ENCODE measurements at regions of chr1 and their contacts with region 1.

Region 1: DNA sequence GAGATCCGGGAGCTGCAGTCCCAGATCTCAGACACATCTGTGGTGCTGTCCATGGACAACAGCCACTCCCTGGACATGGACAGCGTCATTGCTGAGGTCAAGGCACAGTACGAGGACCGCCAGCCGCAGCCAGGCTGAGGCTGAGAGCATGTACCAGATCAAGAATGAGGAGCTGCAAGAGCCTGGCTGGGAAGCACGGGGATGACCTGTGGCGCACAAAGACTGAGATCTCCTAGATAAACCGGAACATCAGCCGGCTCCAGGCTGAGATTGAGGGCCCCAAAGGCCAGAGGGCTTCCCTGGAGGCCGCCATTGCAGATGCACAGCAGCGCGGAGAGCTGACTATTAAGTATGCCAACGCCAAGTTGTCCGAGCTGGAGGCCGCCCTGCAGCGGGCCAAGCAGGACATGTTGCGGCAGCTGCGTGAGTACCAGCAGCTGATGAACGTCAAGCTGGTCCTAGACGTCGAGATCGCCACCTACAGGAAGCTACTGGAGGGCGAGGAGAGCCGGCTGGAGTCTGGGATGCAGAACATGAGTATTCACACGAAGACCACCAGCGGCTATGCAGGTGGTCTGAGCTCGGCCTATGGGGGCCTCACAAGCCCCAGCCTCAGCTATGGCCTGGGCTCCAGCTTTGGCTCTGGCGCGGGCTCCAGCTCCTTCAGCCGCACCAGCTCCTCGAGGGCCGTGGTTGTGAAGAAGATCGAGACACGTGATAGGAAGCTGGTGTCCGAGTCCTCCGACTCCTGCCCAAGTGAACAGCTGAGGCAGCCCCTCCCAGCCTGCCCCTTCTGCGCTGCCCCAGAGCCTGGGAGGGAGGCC is 25.5 kb downstream of the ETV3L start:
- DNase-seq: peak; percentile 82

Region 2: GRCh38 chr1:156070548-156070947 is 1003.6 kb before region 1 on chr1:
- intact Hi-C with region 1: no loop called
- DNase-seq: no peak

Region 3: GRCh38 chr1:156969496-156969895 is 104.7 kb before region 1 on chr1:
- intact Hi-C with region 1: loop called (anchors 5 kb)
- DNase-seq: no peak

Region 4: DNA sequence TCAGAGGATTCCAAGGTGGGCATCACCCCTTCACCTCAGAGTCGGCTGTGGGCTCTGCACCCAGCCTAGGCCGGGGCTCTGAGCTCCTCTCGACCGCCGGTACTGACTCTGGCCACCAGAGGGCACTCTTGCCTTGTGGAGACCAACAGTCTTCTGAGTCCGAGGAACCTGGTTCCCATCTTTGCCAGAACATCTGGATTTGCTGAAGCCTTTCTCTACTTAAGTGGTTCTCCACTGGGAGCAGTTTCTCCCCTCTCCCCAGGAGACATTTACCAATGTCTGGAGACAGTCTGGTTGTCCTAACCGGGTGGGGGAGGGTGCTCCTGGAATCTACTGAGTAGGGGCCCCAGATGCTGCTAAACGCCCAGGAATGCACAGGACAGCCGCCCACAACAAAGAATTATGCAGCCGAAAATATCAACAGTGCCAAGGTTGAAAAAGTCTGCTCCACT is 16.1 kb after region 1 on chr1:
- intact Hi-C with region 1: no loop called
- DNase-seq: peak; percentile 92

Region 5: DNA sequence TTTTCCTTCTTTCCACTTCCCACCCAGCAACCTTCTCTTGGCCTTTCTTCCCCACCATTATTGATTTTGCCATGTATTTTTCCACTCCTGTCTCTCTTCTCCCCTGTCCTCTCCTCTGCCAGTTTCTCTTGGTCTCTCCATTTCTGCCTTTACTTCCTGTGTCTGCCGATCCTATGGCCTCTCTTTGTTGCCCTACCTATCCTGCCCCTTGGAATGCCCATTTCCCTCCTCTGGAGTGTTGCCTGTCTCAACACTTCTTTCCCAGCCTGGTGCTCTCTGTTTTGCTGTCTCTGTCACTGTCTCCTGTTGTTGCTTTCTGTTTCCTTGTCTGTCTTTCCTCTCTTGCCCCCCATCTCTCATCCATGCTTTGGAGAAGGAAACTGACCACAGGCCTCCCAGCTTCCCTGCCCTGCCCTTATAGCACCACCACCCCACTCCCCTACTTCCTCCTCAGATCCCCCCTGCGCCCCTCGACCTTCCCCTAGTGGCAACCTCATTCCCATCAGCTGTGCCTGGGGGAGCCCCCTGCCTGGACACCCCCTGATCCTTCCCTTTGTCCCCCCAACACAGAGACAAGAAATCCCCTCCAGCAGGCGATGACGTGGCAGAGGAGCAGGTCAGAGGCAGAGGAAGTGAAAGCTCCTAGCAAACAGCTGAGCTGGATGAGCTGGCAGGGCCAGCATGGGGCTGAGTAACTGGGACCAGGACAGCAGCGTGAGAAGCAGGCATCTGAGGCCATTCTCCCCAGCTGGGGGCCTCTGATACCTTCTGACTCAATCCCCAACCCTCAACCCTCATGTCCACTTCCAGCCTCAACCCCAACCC is 32.0 kb after region 1 on chr1:
- intact Hi-C with region 1: no loop called
- DNase-seq: peak; percentile 76

Region 6: GRCh38 chr1:157170677-157171515 is 96.7 kb after region 1 on chr1:
- intact Hi-C with region 1: no loop called
- DNase-seq: no peak